Activated B cell treated with CpG ODN at 0.5 μM for 24 hours (primary cell): ENCODE measurements at regions of chr2 and their contacts with region 1.

Region 1: GRCh38 chr2:12716282-12717190 is at the start of gene TRIB2:
- DNase-seq: peak; percentile 79
- ATAC-seq: peak; percentile 84
- H3K4me3 Mint-ChIP-seq: peak within 1 kb of the TSS; percentile 97
- H3K27ac Mint-ChIP-seq: peak within 1 kb of the TSS; percentile 91
- H3K4me1 Mint-ChIP-seq: peaks cover 42% of the 10 kb centered on the region
- H3K27me3 Mint-ChIP-seq: no peaks in the 10 kb centered on the region
- CTCF ChIP-seq: no peak
- total RNA-seq, gene TRIB2: 17.7 and 19.3 TPM in 2 replicates

Region 2: GRCh38 chr2:11743846-11744553 is 972.5 kb before region 1 on chr2:
- CTCF ChIA-PET with region 1: interaction called, 3 read pairs
- POLR2A ChIA-PET with region 1: interaction called, 3 read pairs
- intact Hi-C with region 1: loop called (anchors 2 kb)
- DNase-seq: peak; percentile 62
- ATAC-seq: peak; percentile 60
- H3K4me3 Mint-ChIP-seq: peak overlapping the region; percentile 71
- H3K27ac Mint-ChIP-seq: peak overlapping the region; percentile 82
- H3K4me1 Mint-ChIP-seq: peaks cover 54% of the 10 kb centered on the region
- H3K27me3 Mint-ChIP-seq: no peaks in the 10 kb centered on the region
- CTCF ChIP-seq: no peak

Region 3: GRCh38 chr2:12044857-12045256 is 671.7 kb before region 1 on chr2:
- CTCF ChIA-PET with region 1: interaction called, 11 read pairs
- POLR2A ChIA-PET with region 1: interaction called, 9 read pairs
- intact Hi-C with region 1: loop called (anchors 2 kb)
- DNase-seq: no peak
- ATAC-seq: peak; percentile 89
- H3K4me3 Mint-ChIP-seq: peak overlapping the region; percentile 44
- H3K27ac Mint-ChIP-seq: peak overlapping the region; percentile 68
- H3K4me1 Mint-ChIP-seq: peaks cover 97% of the 10 kb centered on the region
- H3K27me3 Mint-ChIP-seq: no peaks in the 10 kb centered on the region
- CTCF ChIP-seq: no peak

Region 4: DNA sequence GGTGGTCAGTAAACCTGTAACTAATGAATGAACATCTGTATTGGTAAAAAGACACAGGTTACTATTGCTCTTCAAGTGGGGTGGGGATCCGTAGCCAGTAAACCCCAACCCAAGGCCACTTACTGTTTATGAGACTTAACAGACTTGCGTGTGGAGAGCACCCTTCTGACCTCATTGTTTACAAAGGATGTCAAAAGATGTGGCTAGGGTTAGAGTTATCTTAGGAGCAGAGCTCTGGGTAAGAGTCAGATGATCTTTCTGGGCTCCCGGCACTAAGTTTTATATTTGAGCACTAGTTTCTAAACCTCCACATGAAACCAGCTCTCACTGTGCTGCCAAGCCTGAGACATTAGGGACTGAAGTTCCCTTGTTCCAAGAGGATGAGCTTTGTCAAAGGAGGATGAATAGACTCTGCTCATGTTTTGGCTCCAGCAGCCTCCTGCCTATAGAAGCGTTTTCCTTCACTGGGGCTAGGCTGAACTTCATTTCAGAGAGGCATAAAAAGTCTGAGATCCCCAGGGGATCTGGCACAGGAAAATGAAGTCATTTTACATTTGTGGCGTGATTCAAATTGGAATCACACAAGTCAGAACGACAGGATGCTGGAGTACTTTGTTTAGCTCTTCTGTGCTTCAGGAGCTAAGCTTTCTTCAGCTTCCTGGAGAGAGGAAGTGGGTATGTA is 402.9 kb before region 1 on chr2:
- CTCF ChIA-PET with region 1: no interaction called
- POLR2A ChIA-PET with region 1: interaction called, 17 read pairs
- intact Hi-C with region 1: no loop called
- DNase-seq: no peak
- ATAC-seq: no peak
- H3K4me3 Mint-ChIP-seq: no peak overlapping the region
- H3K27ac Mint-ChIP-seq: no peak overlapping the region
- H3K4me1 Mint-ChIP-seq: peaks cover 17% of the 10 kb centered on the region
- H3K27me3 Mint-ChIP-seq: no peaks in the 10 kb centered on the region
- CTCF ChIP-seq: no peak

Region 5: GRCh38 chr2:12486205-12487118 is 230.1 kb before region 1 on chr2:
- CTCF ChIA-PET with region 1: interaction called, 6 read pairs
- POLR2A ChIA-PET with region 1: no interaction called
- intact Hi-C with region 1: loop called (anchors 5 kb)
- DNase-seq: no peak
- ATAC-seq: no peak
- H3K4me3 Mint-ChIP-seq: peak overlapping the region; percentile 50
- H3K27ac Mint-ChIP-seq: peak overlapping the region; percentile 71
- H3K4me1 Mint-ChIP-seq: peaks cover 40% of the 10 kb centered on the region
- H3K27me3 Mint-ChIP-seq: no peaks in the 10 kb centered on the region
- CTCF ChIP-seq: no peak

Region 6: DNA sequence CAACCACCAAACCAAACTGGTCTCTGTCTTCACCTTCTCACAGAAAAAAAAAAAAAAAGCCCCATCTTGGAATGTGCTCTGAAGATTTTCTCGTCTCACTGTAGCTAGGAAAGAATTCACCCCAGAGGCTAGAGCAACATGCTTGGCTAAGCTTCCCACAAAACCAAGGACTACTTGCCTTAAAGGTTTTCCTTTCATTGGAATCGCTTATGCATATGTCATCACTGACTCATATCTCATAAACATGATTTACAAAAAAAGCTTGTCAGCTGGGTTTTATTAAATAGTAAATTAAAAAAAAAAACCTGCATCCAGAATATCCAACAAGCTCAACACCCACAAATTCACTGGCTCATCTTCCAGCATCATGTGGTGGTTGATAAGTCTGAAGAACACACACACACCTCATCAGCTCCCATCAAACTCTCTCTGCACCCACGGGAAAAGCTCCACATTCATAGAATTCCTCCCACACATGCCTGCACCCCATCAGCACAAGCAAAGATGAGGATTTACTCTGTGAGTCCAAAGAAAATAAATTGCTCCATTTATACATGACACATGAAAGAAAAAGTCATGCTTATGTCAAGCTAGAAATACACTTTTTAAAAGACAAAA is 181.8 kb before region 1 on chr2:
- CTCF ChIA-PET with region 1: no interaction called
- POLR2A ChIA-PET with region 1: no interaction called
- intact Hi-C with region 1: no loop called
- DNase-seq: no peak
- ATAC-seq: no peak
- H3K4me3 Mint-ChIP-seq: no peak overlapping the region
- H3K27ac Mint-ChIP-seq: no peak overlapping the region
- H3K4me1 Mint-ChIP-seq: peaks cover 2% of the 10 kb centered on the region
- H3K27me3 Mint-ChIP-seq: peaks cover 5% of the 10 kb centered on the region
- CTCF ChIP-seq: no peak

Region 7: GRCh38 chr2:12737738-12738485 is 21.4 kb after region 1 on chr2:
- CTCF ChIA-PET with region 1: interaction called, 13 read pairs
- POLR2A ChIA-PET with region 1: interaction called, 4 read pairs
- intact Hi-C with region 1: no loop called
- DNase-seq: no peak
- ATAC-seq: no peak
- H3K4me3 Mint-ChIP-seq: no peak overlapping the region
- H3K27ac Mint-ChIP-seq: peak overlapping the region; percentile 20
- H3K4me1 Mint-ChIP-seq: peaks cover 30% of the 10 kb centered on the region
- H3K27me3 Mint-ChIP-seq: no peaks in the 10 kb centered on the region
- CTCF ChIP-seq: no peak

Region 8: GRCh38 chr2:13218205-13218604 is 501.7 kb after region 1 on chr2:
- CTCF ChIA-PET with region 1: no interaction called
- POLR2A ChIA-PET with region 1: no interaction called
- intact Hi-C with region 1: no loop called
- DNase-seq: no peak
- ATAC-seq: no peak
- H3K4me3 Mint-ChIP-seq: no peak overlapping the region
- H3K27ac Mint-ChIP-seq: no peak overlapping the region
- H3K4me1 Mint-ChIP-seq: no peaks in the 10 kb centered on the region
- H3K27me3 Mint-ChIP-seq: no peaks in the 10 kb centered on the region
- CTCF ChIP-seq: no peak